ENCODE measurements at regions of chr1 and their contacts with region 1.

Region 1: GRCh38 chr1:197924516-197925123 is 7.4 kb downstream of the LHX9 start:
- DNase-seq: no peak
- ATAC-seq: peak; percentile 82
- H3K4me3 ChIP-seq: no peak overlapping the region
- H3K27ac ChIP-seq: no peak overlapping the region
- H3K4me1 ChIP-seq: no peaks in the 10 kb centered on the region; the same call in 1 of the 2 replicates
- H3K27me3 ChIP-seq: peaks cover 9% of the 10 kb centered on the region
- CTCF ChIP-seq: peak; percentile 74

Region 2: DNA sequence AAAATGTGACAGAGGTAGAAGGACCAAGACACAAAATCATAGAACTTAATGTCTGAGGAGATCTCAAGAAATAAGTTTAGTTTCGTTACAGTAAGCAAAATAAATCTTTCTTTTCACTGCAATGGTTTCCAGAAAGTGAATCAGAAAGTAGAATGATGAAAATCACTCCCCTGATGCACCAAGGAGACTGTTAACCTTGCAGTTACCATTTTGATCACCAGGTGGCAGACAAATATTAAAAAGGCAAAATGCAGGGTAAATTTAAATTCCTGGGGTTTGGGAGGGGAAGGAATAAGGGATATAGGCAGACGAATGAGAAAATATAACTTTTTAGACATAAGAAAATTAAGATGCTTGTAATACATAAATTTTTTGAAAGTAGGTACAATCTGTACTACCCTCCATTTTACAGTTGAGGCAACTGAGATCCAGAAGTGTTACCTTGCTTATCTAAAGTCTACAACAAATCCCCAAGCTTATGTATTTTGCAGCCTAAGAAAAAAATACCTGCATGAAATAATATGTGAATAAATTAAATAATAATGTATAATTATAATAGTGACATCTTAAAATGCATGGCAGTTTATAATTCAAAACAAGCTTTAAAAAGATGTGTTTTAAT is 403.4 kb before region 1 on chr1:
- CTCF ChIA-PET with region 1: interaction called, 3 read pairs
- POLR2A ChIA-PET with region 1: no interaction called
- in situ Hi-C with region 1: no loop called
- intact Hi-C with region 1: loop called (anchors 5 kb)
- DNase-seq: no peak
- ATAC-seq: no peak; the same call in 1 of the 2 replicates
- H3K4me3 ChIP-seq: no peak overlapping the region
- H3K27ac ChIP-seq: no peak overlapping the region
- H3K4me1 ChIP-seq: no peaks in the 10 kb centered on the region
- H3K27me3 ChIP-seq: no peaks in the 10 kb centered on the region
- CTCF ChIP-seq: peak; percentile 70; the same call in 1 of the 2 replicates

Region 3: GRCh38 chr1:197557309-197557708 is 367.3 kb before region 1 on chr1:
- CTCF ChIA-PET with region 1: no interaction called
- POLR2A ChIA-PET with region 1: no interaction called
- in situ Hi-C with region 1: no loop called
- intact Hi-C with region 1: no loop called
- DNase-seq: peak; percentile 4
- ATAC-seq: no peak
- H3K4me3 ChIP-seq: no peak overlapping the region
- H3K27ac ChIP-seq: no peak overlapping the region
- H3K4me1 ChIP-seq: no peaks in the 10 kb centered on the region
- H3K27me3 ChIP-seq: no peaks in the 10 kb centered on the region
- CTCF ChIP-seq: no peak

Region 4: DNA sequence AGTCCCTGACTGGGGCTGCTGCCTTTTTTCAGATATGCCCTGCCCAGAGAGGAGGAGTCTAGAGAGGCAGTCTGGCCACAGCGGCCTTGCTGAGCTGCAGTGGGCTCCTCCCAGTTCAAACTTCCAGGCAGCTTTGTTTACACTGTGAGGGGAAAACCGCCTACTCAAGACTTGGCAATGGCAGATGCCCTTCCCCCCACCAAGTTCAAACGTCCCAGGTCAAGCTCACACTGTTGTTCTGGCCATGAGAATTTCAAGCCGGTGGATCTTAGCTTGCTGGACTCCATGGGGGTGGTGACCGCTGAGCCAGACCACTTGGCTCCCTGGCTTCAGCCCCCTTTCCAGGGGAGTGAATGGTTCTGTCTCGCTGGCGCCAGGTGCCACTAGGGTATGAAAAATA is 40.4 kb before region 1 on chr1:
- CTCF ChIA-PET with region 1: no interaction called
- POLR2A ChIA-PET with region 1: no interaction called
- in situ Hi-C with region 1: no loop called
- intact Hi-C with region 1: no loop called
- DNase-seq: no peak
- ATAC-seq: no peak
- H3K4me3 ChIP-seq: no peak overlapping the region
- H3K27ac ChIP-seq: no peak overlapping the region
- H3K4me1 ChIP-seq: no peaks in the 10 kb centered on the region
- H3K27me3 ChIP-seq: no peaks in the 10 kb centered on the region
- CTCF ChIP-seq: no peak

Measured in Panc1 (cell line).